ENCODE measurements at regions of chr6 and their contacts with region 1.

Region 1: DNA sequence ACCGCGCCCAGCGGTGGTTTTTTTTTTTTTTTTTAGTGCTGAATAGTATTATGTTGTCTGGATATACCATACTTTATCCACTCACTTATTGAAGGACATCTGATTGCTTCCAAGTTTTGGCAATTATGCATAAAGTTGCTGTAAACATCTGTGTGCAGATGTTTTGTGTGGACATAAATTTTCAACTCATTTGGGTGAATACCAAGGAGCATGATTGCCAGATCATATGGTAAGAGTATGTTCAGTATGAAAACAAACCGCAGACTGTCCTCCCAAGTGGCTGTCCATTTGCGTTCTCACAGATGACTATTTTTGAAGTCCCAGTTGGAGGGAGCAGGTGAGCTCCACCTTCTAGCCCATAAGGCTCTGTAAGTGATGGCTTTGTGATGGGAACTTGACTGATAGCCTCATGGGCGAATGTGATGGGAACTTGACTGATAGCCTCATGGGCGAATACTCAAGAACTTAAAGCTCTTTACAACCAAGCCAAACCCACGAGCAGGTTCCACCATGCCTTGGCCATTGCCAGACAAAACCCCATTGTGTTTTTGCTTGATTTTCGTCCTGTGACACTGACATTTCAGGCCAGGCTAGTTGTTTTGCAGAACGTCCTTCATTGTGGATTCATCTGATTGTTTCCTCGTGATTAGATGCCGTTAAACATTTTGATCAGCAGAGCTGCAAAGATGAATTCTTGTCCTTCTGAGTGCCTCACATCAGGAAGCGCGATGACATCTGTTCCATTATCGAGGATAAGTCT is 51.0 kb downstream of the ZBTB2 start:
- DNase-seq: no peak
- CTCF ChIP-seq: no peak

Region 2: DNA sequence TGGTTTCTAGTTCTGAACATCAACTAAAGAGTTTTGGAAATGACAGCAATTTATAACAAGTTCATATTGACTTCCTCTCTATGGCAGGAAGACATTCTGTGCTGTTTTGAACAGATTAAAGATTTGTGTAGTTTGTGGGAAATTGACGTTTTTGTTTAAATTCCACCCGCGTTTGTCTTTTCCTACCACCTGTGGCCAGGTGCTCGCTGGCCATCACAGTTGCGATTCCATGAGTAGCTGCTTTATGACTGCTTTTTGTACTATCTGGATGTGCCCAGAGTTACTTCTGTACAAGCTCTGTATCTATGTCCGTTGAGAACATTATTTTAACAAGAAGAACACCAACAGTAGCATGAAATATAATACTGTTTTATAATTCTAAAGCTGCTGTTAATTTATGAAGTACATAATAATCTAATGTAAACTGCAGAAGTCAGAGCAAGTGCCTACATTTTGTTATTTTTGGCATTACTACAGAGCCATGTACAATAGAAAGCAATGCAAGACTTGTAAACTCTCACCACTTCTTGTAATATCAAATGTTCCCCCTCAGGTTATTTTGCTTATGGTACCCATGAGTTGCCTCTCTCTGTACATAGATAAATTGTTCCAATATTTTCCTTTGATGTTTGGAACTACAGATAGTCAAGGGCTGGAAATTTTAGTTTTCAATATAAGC is 17.5 kb after region 1 on chr6:
- CTCF ChIA-PET with region 1: interaction called, 16 read pairs
- POLR2A ChIA-PET with region 1: no interaction called
- DNase-seq: no peak
- CTCF ChIP-seq: no peak

Region 3: GRCh38 chr6:151390276-151391032 is 50.1 kb after region 1 on chr6:
- CTCF ChIA-PET with region 1: no interaction called
- POLR2A ChIA-PET with region 1: no interaction called
- DNase-seq: peak; percentile 96
- CTCF ChIP-seq: peak; percentile 6

Measured in GM10248 (cell line).